Aorta (tissue), 5 donors: ENCODE measurements at regions of chr2 and their contacts with region 1.

Region 1: DNA sequence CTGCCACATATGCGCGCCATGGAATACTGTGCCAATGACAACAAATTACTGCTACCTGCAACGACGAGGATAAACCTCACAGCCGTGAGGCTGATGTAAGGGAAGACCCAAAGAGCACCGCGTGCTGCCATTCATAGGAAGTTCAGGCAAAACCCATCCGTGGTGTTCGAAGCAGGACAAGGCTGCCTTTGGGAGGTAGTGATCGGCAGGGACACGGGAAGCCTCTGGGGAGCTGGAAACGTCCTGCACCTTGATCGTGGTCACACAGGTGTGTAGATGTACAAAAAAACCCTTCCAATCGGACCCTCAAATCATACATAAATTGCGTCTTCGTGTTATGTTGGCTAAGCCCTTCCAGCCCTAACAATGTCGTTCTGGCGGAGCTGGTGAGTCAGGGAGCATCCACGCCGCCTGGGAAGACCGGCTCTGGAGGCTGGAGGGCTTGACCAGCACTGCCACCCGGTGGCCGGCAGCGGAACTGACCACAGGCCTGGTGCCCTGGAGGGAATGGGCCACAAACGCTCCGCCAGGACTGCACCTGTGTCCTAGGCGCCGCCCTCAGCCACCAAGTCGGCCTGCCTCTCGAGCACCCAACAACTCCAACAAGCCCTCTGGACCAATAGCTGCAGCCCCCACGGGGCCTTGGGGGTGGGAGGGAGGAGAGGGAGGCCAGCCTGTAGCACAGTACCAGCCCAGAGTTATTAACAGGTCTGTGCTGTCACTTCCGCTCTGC is 4.1 kb upstream of the NEURL3 start:
- DNase-seq: peak; percentile 91 to 97
- ATAC-seq: peak; percentile 94
- H3K4me3 ChIP-seq: no peak overlapping the region
- H3K27ac ChIP-seq: no peak overlapping the region
- H3K4me1 ChIP-seq: no peaks in the 10 kb centered on the region
- H3K27me3 ChIP-seq: no peaks in the 10 kb centered on the region

Region 2: DNA sequence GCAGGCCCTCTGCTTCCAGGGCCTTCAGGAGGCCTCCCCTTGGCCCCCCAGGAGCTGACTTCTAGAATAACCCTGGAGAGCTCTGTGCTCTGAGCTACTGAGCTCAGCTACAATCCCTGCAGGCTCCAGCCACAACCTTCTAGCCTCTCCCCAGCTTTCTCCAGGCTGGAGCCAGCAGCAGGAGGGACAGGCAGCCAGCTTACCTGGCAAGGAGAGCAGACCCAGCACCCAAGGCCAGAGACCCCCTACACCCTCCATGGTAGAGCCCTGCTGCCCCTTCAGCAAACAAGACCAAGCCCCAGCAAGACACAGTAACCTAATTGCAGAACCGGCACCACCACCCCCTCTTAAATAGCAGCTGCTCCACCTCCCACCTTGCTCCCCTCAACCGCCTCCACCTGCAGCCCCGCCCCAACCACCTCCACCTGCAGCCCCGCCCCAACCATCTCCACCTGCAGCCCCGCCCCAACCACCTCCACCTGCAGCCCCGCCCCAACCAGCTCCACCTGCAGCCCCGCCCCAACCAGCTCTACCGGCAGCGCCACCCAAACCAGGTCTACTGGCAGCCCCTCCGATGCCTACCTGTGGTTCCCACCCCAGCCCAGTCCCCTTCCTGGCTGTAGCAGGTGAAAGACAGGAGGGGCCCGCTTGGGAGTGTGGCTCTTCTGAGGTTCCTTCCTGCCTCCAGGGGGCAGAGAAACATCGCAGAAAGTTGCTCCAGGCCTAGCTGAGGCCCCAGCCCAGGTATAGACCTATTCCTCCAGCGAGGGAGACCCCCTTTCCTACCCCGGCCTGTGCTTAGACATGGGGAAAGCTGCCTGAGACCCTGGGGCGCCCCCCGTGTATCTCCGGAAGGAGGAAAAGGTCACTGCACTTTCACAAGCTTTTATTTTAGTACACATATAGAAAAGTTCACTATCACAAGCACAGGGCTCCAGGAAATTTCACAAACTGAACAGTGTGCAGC is 370.8 kb before region 1 on chr2 and contains the start of gene ASTL:
- intact Hi-C with region 1: loop called (anchors 10 kb)
- DNase-seq: peak in 1 of 2 donors; percentile 52
- ATAC-seq: no peak
- H3K4me3 ChIP-seq: no peak within 1 kb of the TSS
- H3K27ac ChIP-seq: no peak within 1 kb of the TSS
- H3K4me1 ChIP-seq: no peaks in the 10 kb centered on the region
- H3K27me3 ChIP-seq: no peaks in the 10 kb centered on the region
- total RNA-seq, gene ASTL: 0.57 to 0.62 TPM

Region 3: GRCh38 chr2:96145036-96145847 is 364.0 kb before region 1 on chr2 and contains the start of gene DUSP2:
- intact Hi-C with region 1: loop called in 1 of 2 experiments (anchors 10 kb)
- DNase-seq: peak; percentile 88 to 92
- ATAC-seq: peak; percentile 75
- H3K4me3 ChIP-seq: peak within 1 kb of the TSS; percentile 18 to 23
- H3K27ac ChIP-seq: peak within 1 kb of the TSS; percentile 6 to 26
- H3K4me1 ChIP-seq: no peaks in the 10 kb centered on the region
- H3K27me3 ChIP-seq: no peaks in the 10 kb centered on the region
- total RNA-seq, gene DUSP2: 5.7 to 7.5 TPM

Region 4: DNA sequence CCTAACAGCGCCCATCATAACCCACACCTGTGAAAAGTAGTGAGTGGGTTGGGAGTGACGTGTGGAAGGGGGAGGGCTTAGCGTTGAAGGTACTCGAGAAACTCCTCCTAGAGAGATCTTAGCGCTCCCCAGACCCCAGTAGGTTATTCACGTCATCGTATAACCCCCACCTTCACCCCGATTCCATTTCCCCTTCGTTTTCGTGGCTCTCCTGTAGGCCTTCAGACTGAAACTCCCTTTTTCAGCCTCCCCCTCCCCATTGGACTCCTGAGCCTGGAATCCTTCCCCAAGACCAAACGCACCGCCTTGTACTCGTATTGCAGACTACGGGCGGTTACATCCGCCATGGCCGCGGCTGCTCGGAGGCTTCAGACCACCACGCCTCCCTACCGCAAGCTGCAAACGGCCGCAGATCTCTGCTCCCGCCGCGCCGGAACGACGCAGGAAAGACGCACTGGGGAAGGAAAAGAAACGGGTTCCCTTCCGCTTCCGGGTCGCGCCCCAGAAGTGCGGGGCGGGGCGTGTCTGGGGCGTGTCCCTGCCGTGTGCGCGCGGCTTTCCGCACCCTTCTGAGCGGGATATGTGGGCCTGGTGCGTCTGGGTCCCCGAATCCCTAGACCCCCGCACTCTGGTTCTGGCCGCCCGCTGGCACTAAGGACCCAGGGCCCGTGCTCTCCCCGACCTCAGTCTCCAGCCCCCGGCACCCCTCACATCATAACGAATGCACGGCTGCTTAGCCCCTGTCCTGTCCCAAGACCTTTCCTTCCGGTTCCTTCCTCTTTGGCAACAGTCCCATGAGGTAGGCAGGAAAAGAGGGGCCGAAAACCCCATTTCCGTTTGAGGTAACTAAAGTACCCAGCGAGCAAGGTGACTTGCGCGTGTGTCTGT is 203.9 kb before region 1 on chr2 and contains the start of gene SNRNP200:
- intact Hi-C with region 1: loop called (anchors 2 to 10 kb)
- DNase-seq: peak; percentile 92 to 95
- ATAC-seq: peak; percentile 97
- H3K4me3 ChIP-seq: peak within 1 kb of the TSS; percentile 53 to 74
- H3K27ac ChIP-seq: peak within 1 kb of the TSS in 1 of 2 donors; percentile 55
- H3K4me1 ChIP-seq: no peaks in the 10 kb centered on the region
- H3K27me3 ChIP-seq: no peaks in the 10 kb centered on the region
- total RNA-seq, gene SNRNP200: 85.0 to 99.7 TPM

Region 5: DNA sequence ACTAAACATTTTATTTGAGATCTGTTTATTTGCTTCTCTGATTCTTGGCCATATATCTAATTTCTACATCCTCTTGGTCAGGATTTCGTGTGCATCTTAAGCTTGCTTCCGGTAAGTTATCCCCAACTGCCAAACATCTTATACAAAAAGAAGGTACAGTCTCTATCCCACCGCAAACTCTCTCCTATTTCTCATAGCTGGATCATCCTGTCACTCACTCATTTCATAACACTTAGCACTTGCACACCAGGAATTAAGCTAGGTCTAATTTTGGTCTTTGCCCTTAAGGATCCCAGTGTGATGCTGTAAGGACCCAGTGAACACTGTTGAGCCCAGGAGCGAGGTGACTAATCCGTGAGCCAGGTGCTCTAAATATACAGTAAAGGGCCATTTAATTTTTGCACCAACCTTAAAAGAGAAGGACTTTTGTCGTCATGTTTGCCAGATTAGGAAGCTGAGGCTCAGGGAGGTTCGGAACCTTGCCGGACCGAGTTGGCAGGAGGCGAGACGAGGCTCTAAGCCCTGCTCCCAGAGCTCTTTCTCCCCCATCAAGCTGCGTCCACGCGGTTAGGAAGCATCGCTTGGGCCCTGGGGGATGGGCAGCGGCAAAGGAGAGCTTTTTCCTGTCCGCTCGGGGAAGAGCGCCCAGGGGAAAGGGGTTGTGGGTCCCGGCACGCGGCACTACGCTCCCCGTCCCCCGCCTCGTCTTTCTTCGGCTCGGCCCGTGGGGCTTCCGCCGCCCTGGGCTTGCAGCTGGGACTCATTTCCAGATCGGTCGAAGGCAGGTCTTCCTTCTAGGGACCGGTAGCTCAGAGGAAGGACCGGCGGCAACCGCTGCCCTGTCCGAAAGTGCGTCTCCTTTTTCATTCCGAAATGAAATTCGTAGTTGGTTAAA is 188.3 kb before region 1 on chr2:
- intact Hi-C with region 1: no loop called
- DNase-seq: peak; percentile 70 to 80
- ATAC-seq: peak; percentile 59
- H3K4me3 ChIP-seq: peak overlapping the region; percentile 33 to 57
- H3K27ac ChIP-seq: no peak overlapping the region
- H3K4me1 ChIP-seq: no peaks in the 10 kb centered on the region
- H3K27me3 ChIP-seq: no peaks in the 10 kb centered on the region

Region 6: DNA sequence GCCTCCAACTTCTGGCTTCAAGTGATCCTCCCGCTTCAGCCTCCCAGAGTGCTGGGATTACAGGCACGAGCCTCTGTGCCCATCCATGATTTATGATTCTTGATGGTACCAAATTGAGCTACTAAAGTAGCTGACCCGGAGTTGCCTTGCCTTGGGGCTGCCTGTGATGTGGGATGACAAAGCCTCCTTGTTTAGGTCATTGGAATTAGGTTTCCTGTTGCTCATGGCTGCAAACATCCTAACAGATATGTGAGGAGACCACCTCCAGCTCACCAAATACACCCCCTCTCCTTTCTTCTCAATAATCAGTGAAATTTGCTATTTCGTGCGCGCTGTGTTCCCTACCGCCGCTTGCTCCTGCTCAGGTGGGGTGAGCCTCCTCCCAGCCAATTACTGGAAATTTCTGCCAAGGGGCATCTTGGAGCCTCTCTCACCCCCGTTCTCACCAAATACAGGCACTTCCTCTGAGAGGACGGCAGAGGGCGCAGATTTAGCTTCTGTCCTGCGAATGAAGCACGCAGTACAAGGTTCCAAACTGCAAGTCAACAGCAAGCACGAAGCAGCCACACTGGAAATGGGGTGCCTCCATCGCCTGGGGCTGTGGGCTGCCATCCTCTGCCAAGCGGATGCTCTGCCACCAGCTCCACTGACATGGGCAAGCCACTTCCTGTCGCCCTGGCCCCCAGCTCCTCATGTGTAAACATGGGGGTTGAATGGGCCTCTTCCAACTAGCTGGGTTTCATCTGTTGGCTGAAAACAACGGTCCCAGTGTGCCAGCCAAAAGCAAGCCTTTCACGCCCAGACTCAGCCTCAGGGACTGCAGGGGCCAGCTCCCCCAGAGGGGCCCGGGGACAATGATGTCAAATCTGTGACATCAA is 102.0 kb before region 1 on chr2:
- intact Hi-C with region 1: loop called (anchors 1 to 2 kb)
- DNase-seq: peak; percentile 64 to 78
- ATAC-seq: peak; percentile 69
- H3K4me3 ChIP-seq: no peak overlapping the region
- H3K27ac ChIP-seq: no peak overlapping the region
- H3K4me1 ChIP-seq: peaks cover 0 to 4% of the 10 kb centered on the region in 2 donors
- H3K27me3 ChIP-seq: no peaks in the 10 kb centered on the region

Region 7: GRCh38 chr2:96470636-96471035 is 38.6 kb before region 1 on chr2:
- intact Hi-C with region 1: loop called in 1 of 2 experiments (anchors 2 kb)
- DNase-seq: peak; percentile 80 to 89
- ATAC-seq: peak; percentile 81
- H3K4me3 ChIP-seq: peak overlapping the region; percentile 4 to 41
- H3K27ac ChIP-seq: no peak overlapping the region
- H3K4me1 ChIP-seq: no peaks in the 10 kb centered on the region
- H3K27me3 ChIP-seq: no peaks in the 10 kb centered on the region

Region 8: GRCh38 chr2:96554293-96555145 is 45.2 kb after region 1 on chr2:
- intact Hi-C with region 1: loop called in 1 of 2 experiments (anchors 5 kb)
- DNase-seq: peak; percentile 87 to 92
- ATAC-seq: peak; percentile 84
- H3K4me3 ChIP-seq: no peak overlapping the region
- H3K27ac ChIP-seq: no peak overlapping the region
- H3K4me1 ChIP-seq: no peaks in the 10 kb centered on the region
- H3K27me3 ChIP-seq: no peaks in the 10 kb centered on the region

Region 9: GRCh38 chr2:96574364-96574763 is 65.1 kb after region 1 on chr2:
- intact Hi-C with region 1: no loop called
- DNase-seq: no peak
- ATAC-seq: no peak
- H3K4me3 ChIP-seq: no peak overlapping the region
- H3K27ac ChIP-seq: no peak overlapping the region
- H3K4me1 ChIP-seq: no peaks in the 10 kb centered on the region
- H3K27me3 ChIP-seq: no peaks in the 10 kb centered on the region